Activated T-helper 2 cell treated with anti-CD3 and anti-CD28 coated beads, Interferon-gamma antibody, Interleukin-2, Interleukin-4, amounts not matched to agents 10 μg/mL and 5 μg/mL and 100 μg/mL, durations not matched to agents 14 hours and 24 hours and 36 hours (primary cell): ENCODE measurements at regions of chr3 and their contacts with region 1.

Region 1: DNA sequence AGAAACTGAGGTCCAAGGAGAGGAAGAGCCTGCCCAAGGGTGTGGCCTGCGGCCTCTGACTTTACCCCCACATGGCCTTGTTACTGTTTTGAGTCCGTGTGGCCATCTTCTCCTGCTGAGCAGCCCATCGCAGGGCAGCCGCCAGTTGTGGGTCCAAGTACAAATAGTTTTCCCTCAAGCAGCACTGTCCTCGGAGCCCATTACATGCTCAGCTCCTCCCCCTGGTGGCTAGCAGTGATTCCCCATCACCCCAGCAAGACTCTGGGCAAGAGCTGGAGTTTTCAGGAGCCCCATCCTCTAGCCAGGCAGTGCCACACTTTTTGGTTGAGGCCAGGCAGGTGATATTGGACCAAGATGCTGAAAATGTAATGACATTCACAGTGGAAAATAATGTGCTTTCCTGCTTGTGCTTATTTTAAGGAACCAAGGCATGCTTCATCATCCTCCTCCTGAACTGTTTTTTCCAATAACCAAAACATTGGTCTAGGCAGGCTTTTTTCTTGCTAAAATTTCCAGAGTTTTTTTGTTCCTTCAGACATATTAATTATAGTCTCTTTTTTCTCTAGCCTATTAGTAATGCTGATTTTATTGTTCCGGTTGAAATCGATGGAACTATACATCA is 23.2 kb upstream of the VILL start:
- DNase-seq: peak; percentile 50
- H3K4me3 Mint-ChIP-seq: no peak overlapping the region
- H3K27ac Mint-ChIP-seq: no peak overlapping the region
- H3K4me1 Mint-ChIP-seq: no peaks in the 10 kb centered on the region
- H3K27me3 Mint-ChIP-seq: no peaks in the 10 kb centered on the region

Region 2: DNA sequence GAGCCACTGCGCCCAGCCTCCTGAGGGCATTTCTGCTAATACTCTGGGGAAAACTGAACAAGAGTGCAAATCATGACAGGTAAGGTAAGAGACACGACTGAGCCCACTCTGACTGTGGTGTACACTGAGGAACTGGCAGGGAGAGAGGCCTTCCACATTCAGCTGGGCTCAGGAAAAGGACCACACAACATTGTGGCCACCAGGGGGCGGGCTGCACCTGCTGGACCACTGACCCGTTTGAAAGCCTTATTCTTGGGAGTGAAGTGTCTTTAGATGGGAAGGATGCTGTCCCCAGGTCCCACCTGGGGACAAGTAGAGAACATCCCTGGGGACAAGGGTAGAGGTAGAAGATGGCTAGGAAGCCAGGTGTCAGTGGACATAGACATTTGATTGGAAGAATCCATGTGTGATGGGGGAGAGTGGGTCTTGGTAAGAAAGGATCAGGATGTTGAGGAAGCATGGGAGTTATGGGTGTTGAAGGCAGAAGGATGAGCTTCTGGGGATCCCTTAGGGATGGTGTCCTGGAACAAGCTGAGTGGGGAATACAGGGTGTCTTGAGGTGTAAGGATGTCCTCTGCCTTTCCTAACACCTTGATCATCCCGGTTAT is 111.9 kb before region 1 on chr3:
- intact Hi-C with region 1: loop called (anchors 1 kb)
- DNase-seq: peak; percentile 65
- H3K4me3 Mint-ChIP-seq: no peak overlapping the region
- H3K27ac Mint-ChIP-seq: no peak overlapping the region
- H3K4me1 Mint-ChIP-seq: peaks cover 8% of the 10 kb centered on the region
- H3K27me3 Mint-ChIP-seq: no peaks in the 10 kb centered on the region

Region 3: DNA sequence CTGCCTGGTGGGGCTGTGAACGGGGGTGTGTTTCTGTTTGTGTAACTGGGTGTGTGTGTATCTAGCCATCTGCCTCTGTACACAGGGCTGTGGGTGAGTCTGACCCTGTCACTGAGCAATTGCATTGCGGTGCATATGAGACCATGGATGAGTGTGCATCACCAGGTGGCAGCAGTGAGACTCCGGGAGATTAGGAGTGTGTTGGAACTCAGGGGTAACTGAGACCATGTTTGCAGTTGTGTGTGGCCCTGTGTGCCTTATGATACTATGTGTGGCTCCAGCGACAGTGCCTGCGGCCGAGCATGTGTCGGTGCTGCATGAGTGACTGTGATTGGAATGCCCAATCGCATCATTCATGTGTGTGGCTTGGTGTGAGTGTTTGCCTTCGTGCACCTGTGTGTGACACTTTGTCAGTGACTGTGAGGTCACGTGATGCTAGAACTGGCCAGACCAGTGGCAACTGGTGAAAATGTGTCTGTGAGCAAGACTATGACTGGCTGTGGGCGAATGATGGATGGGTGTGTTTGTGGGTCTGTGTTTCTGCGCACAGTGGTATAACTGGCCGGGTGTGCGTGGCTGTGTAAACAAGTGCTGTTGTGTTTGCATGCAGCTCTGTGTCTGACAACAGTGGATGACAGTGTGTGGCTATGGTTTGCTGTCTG is 37.2 kb after region 1 on chr3:
- intact Hi-C with region 1: no loop called
- DNase-seq: no peak
- H3K4me3 Mint-ChIP-seq: no peak overlapping the region
- H3K27ac Mint-ChIP-seq: peak overlapping the region; percentile 14
- H3K4me1 Mint-ChIP-seq: peaks cover 11% of the 10 kb centered on the region
- H3K27me3 Mint-ChIP-seq: no peaks in the 10 kb centered on the region